ENCODE measurements at regions of chr16 and their contacts with region 1.

Region 1: GRCh38 chr16:4330277-4330874 is 14.5 kb downstream of the GLIS2 start:
- DNase-seq: peak; percentile 51
- ATAC-seq: peak; percentile 67
- H3K4me3 ChIP-seq: no peak overlapping the region
- H3K27ac ChIP-seq: no peak overlapping the region
- H3K4me1 ChIP-seq: peaks cover 31% of the 10 kb centered on the region
- H3K27me3 ChIP-seq: no peaks in the 10 kb centered on the region
- CTCF ChIP-seq: peak; percentile 94
- EP300 ChIP-seq: no peak
- POLR2A ChIP-seq: no peak
- RAD21 ChIP-seq: peak; percentile 93

Region 2: GRCh38 chr16:3745751-3746355 is 584.5 kb before region 1 on chr16:
- CTCF ChIA-PET with region 1: no interaction called
- POLR2A ChIA-PET with region 1: no interaction called
- in situ Hi-C with region 1: no loop called
- intact Hi-C with region 1: no loop called
- DNase-seq: no peak
- ATAC-seq: no peak
- H3K4me3 ChIP-seq: no peak overlapping the region
- H3K27ac ChIP-seq: no peak overlapping the region
- H3K4me1 ChIP-seq: no peaks in the 10 kb centered on the region
- H3K27me3 ChIP-seq: no peaks in the 10 kb centered on the region
- CTCF ChIP-seq: no peak
- EP300 ChIP-seq: no peak
- POLR2A ChIP-seq: no peak
- RAD21 ChIP-seq: no peak

Region 3: GRCh38 chr16:4253394-4254150 is 76.8 kb before region 1 on chr16:
- CTCF ChIA-PET with region 1: interaction called, 17 read pairs
- POLR2A ChIA-PET with region 1: interaction called, 15 read pairs
- in situ Hi-C with region 1: no loop called
- intact Hi-C with region 1: no loop called
- DNase-seq: peak; percentile 97
- ATAC-seq: peak; percentile 96
- H3K4me3 ChIP-seq: peak overlapping the region; percentile 48 to 77 (median 74); a peak in 5 of 6 replicates
- H3K27ac ChIP-seq: peak overlapping the region; percentile 69
- H3K4me1 ChIP-seq: 0 out of 2 replicates have a peak, but pooled peaks cover 6% of the 10 kb centered on the region
- H3K27me3 ChIP-seq: no peaks in the 10 kb centered on the region
- CTCF ChIP-seq: no peak; the same call in 1 of the 2 replicates
- EP300 ChIP-seq: no peak
- POLR2A ChIP-seq: peak; percentile 87
- RAD21 ChIP-seq: no peak; the same call in 1 of the 2 replicates

Region 4: GRCh38 chr16:4271176-4272066 is 59.0 kb before region 1 on chr16:
- CTCF ChIA-PET with region 1: no interaction called
- POLR2A ChIA-PET with region 1: interaction called, 7 read pairs
- in situ Hi-C with region 1: loop called (anchors 10 kb)
- intact Hi-C with region 1: no loop called
- DNase-seq: peak; percentile 91
- ATAC-seq: peak; percentile 85
- H3K4me3 ChIP-seq: peak overlapping the region; percentile 76 to 88 (median 87)
- H3K27ac ChIP-seq: peak overlapping the region; percentile 90
- H3K4me1 ChIP-seq: peaks cover 35% of the 10 kb centered on the region
- H3K27me3 ChIP-seq: no peaks in the 10 kb centered on the region; a peak in 1 of 5 replicates
- CTCF ChIP-seq: peak; percentile 46
- EP300 ChIP-seq: no peak
- POLR2A ChIP-seq: peak; percentile 70 to 78
- RAD21 ChIP-seq: peak; percentile 60

Region 5: DNA sequence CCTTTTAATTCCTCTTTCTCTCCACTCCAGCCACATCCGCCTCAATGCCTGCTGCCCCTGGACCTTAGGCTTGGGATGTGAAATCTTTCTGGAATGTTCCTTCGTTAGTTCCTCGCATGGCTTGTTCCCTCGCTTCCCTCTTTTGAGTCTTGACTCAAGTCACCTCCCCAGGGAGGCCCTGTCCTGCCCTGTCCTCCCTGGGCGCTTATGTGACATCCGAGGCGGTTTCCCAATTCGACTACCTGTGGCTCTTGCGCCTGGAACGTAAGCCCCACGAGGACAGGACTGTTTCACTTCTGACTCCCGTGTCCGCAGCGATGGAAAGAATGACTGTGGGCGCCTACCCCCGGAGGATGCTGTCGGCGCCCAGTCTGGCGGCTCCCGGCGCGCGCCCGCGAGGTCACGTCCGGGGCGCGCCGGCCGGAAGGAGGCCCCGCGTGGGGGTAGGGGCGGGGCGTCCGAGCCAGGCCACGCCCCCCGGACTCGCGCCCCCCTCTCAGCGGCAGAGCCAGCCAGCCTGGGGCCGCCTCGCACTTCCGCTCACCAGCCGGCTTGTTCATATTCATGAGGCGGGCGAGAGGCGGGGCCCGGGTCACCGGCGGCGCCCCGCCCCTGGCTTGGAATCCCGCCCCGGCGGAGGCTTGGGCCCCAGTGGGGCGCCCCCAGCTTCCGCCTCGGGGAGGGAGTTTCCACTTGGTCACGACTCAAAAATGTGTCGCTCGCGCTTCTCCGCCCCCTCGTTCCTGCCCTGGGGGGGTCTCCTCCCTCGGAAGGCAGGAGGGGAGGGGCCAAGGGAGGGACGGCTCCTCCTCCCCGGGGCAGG is 22.9 kb before region 1 on chr16:
- CTCF ChIA-PET with region 1: interaction called, 69 read pairs
- POLR2A ChIA-PET with region 1: interaction called, 14 read pairs
- in situ Hi-C with region 1: no loop called
- intact Hi-C with region 1: no loop called
- DNase-seq: peak; percentile 80
- ATAC-seq: peak; percentile 71
- H3K4me3 ChIP-seq: peak overlapping the region; percentile 62 to 73 (median 65); a peak in 5 of 6 replicates
- H3K27ac ChIP-seq: peak overlapping the region; percentile 42
- H3K4me1 ChIP-seq: peaks cover 47% of the 10 kb centered on the region
- H3K27me3 ChIP-seq: peaks cover 0 to 9% of the 10 kb centered on the region in 2 experiments; a peak in 2 of 5 replicates
- CTCF ChIP-seq: 0 out of 2 replicates have a peak, but pooled peaks have one; percentile 11
- EP300 ChIP-seq: peak in 1 of 2 experiments; percentile 34; a peak in 1 of 4 replicates
- POLR2A ChIP-seq: peak in 1 of 2 experiments; percentile 56; a peak in 1 of 4 replicates
- RAD21 ChIP-seq: no peak

Region 6: GRCh38 chr16:4384509-4384942 is 54.1 kb after region 1 on chr16:
- CTCF ChIA-PET with region 1: no interaction called
- POLR2A ChIA-PET with region 1: no interaction called
- in situ Hi-C with region 1: no loop called
- intact Hi-C with region 1: no loop called
- DNase-seq: no peak
- ATAC-seq: peak; percentile 1; the same call in 1 of the 3 replicates
- H3K4me3 ChIP-seq: no peak overlapping the region
- H3K27ac ChIP-seq: no peak overlapping the region
- H3K4me1 ChIP-seq: peaks cover 20% of the 10 kb centered on the region
- H3K27me3 ChIP-seq: no peaks in the 10 kb centered on the region
- CTCF ChIP-seq: no peak
- EP300 ChIP-seq: no peak
- POLR2A ChIP-seq: no peak; a peak in 1 of 4 replicates
- RAD21 ChIP-seq: no peak

Region 7: DNA sequence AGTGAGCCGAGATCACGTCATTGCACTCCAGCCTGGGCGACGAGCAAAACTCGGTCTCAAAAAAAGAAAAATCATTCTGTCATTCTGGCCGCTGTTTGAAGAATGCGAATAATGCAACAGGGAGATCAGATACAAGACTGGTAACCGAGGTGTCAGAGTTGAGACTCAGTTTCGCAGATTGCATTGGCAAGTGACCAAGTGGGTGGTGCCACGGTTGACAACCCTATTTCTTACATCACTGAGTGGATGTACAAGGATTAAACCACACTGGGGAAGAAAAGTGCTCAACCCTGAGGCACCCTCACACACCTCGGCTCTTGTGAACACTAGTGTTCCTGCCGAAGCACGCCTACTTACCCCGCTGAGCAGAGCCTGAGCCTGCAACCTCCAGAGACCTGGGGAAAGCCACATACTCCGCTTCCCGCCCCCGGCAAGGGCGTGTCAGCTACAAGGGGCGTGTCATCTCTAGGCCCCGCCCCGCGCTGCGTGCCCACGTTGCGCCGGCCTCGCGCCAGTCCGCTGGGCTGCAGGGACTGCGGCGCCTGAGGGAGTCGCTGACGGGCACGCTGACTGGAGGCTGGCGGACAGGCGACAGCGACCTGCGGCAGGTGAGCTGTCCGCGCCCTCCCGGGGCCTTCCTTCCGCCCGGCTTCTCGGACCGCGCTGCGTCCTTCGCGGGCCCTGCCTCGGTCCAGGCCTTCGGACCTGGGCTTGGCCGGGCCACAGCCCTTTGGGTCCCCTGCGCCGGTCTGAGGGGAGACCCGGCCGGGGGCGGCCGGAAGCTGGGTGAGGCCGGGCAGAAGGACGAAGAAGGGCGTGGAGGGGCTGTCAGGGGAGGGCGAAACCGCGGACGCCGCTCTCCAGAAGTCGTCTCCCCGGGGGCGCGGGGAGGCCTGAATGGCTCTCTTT is 145.8 kb after region 1 on chr16 and contains the start of gene HMOX2:
- CTCF ChIA-PET with region 1: no interaction called
- POLR2A ChIA-PET with region 1: no interaction called
- in situ Hi-C with region 1: no loop called
- intact Hi-C with region 1: no loop called
- DNase-seq: peak; percentile 86
- ATAC-seq: peak; percentile 93
- H3K4me3 ChIP-seq: peak within 1 kb of the TSS; percentile 70 to 90 (median 75)
- H3K27ac ChIP-seq: peak within 1 kb of the TSS; percentile 78
- H3K4me1 ChIP-seq: peaks cover 42% of the 10 kb centered on the region
- H3K27me3 ChIP-seq: no peaks in the 10 kb centered on the region
- CTCF ChIP-seq: peak; percentile 80
- EP300 ChIP-seq: 0 out of 4 replicates have a peak, but pooled peaks have one; percentile 15 to 26
- POLR2A ChIP-seq: peak; percentile 85 to 99
- RAD21 ChIP-seq: peak; percentile 74
- total RNA-seq, gene HMOX2: 70.4 and 82.4 TPM in 2 replicates